ENCODE measurements at regions of chr17 and their contacts with region 1.

Region 1: GRCh38 chr17:29579866-29580771 is 9.3 kb downstream of the GIT1 start:
- DNase-seq: peak; percentile 96
- H3K4me3 Mint-ChIP-seq: no peak overlapping the region
- H3K27ac Mint-ChIP-seq: peak overlapping the region; percentile 77
- H3K4me1 Mint-ChIP-seq: peaks cover 24% of the 10 kb centered on the region
- H3K27me3 Mint-ChIP-seq: no peaks in the 10 kb centered on the region

Region 2: DNA sequence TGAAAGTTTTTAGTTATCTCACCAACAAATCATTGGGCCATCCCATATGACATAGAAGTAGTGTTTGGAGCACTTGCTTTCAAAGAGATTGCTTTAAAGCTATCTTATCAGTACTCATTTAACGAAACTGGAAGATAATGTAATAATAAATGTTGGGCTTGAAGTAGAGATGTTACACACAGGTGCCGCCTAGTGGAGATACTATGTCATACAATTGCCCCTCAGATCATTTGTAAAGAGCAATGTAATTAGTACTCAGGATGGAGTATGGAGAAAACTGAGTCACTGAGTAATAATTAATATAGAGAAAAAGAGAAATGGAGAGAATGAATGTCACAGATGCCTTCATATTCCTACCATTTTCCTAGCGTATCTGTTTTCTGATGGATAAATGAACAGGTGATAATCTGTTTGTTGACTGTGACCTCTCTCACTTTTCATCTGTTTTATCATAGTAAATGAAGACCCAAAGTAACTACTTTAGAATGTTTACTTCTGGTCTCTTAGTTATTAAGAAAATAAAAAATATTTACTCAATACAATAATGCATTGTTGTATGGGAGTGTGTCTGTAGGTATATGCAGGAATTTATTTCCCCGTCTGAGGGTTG is 441.7 kb after region 1 on chr17:
- CTCF ChIA-PET with region 1: no interaction called
- intact Hi-C with region 1: loop called (anchors 1 kb)
- DNase-seq: peak; percentile 63
- H3K4me3 Mint-ChIP-seq: no peak overlapping the region
- H3K27ac Mint-ChIP-seq: no peak overlapping the region
- H3K4me1 Mint-ChIP-seq: no peaks in the 10 kb centered on the region
- H3K27me3 Mint-ChIP-seq: no peaks in the 10 kb centered on the region

Measured in activated naive CD4-positive, alpha-beta T cell treated with anti-CD3 and anti-CD28 coated beads for 36 hours (primary cell).